PC-9 (cell line): ENCODE measurements at regions of chr16 and their contacts with region 1.

Region 1: DNA sequence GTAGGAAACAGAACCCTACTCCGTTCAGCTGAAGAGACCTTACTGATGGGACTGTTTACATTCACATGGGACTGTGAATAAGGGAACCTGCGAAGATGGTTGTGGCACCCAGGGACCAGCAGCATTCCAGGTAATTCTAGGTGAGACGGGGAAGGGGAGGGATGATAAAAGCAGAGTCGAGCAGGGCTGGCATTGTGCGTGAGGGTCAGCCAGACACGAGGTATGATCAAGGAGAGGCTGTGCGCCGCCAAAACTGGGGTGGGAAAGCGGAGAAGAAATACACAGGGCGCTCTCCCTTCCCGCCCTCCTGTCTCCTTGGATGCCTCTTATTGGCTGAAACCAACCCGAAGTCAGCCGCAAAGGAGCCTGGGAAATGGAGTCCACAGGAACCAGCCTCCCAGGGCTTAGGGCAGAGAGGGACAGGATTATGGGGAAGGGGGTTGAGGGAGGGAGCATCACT is 38.4 kb upstream of the CSNK2A2 start:
- DNase-seq: peak in 1 of 2 experiments; percentile 56
- H3K4me3 ChIP-seq: peak overlapping the region; percentile 61
- H3K27ac ChIP-seq: no peak overlapping the region
- H3K4me1 ChIP-seq: 0 out of 2 replicates have a peak, but pooled peaks cover 4% of the 10 kb centered on the region
- H3K27me3 ChIP-seq: no peaks in the 10 kb centered on the region
- CTCF ChIP-seq: no peak

Region 2: DNA sequence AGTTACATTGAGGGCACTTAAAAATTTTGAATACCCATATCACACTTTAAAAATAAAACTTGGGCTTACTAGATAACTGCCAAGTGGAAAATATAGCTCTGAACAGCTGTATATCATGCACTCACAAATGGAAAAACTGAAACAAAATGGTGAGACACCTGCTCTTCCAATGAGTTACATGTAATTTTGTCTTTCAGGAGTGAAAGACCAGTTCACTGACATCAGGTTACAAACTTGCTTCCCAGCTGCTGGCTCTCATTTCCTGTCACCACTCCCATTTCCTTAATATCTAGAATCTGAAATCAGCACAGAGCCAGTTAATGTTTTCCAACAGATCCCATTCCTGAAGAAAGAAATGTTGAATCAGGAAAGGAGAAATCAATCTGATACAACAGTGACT is 49.2 kb before region 1 on chr16:
- CTCF ChIA-PET with region 1: no interaction called
- POLR2A ChIA-PET with region 1: no interaction called
- intact Hi-C with region 1: no loop called
- DNase-seq: no peak
- H3K4me3 ChIP-seq: no peak overlapping the region
- H3K27ac ChIP-seq: 0 out of 2 replicates have a peak overlapping the region, but pooled peaks have one; percentile 4
- H3K4me1 ChIP-seq: no peaks in the 10 kb centered on the region
- H3K27me3 ChIP-seq: no peaks in the 10 kb centered on the region
- CTCF ChIP-seq: no peak

Region 3: DNA sequence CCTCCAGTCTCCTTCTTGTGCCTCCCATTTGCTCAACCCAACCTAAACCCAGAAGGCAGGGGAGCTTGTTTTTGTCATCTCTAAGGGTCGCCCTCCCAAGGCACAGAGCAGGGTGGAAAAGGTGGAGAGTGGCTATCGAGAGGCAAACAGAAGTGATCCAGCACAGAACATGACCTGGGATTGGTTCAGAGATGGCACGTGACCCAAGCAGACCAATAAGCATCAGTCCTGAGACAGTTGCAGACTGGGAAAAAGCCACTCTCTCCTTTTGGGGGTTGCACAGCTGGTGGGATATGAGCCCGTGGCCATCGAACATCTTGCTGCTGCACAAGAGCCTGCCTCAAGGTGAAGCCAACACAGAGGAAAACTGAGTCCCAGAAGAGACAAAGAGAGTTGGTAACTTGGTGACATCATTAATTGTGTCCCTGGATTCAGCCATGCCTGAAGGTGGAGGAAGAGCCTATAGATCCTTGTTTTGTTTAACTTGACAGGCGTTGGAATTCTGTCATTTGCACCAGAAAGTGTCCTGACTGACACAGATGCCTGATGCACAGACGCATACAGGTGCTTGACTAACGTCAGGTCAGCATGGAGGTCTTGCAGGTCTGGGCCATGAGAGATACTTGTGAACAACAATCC is 10.2 kb before region 1 on chr16:
- CTCF ChIA-PET with region 1: no interaction called
- POLR2A ChIA-PET with region 1: interaction called, 11 read pairs
- intact Hi-C with region 1: no loop called
- DNase-seq: no peak
- H3K4me3 ChIP-seq: no peak overlapping the region
- H3K27ac ChIP-seq: no peak overlapping the region
- H3K4me1 ChIP-seq: peaks cover 25% of the 10 kb centered on the region
- H3K27me3 ChIP-seq: no peaks in the 10 kb centered on the region
- CTCF ChIP-seq: no peak

Region 4: DNA sequence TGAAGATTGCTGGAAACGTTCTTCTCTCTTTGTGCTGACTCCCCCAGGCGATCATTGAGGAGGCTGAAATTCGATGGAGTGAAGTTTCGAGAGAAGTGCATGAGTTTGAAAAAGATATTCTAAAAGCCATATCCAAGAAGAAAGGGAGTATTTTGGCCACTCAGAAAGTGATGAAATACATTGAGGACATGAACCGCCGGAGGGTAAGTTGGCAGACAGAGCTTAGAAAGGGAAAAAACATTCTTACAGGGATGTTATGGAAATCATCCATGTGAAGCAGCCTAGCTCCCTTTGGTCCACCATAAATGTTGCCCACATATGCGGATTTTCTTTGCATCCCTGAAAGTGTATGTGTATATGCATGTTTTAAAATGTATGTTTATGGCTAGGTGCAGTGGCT is 22.1 kb after region 1 on chr16:
- CTCF ChIA-PET with region 1: no interaction called
- POLR2A ChIA-PET with region 1: no interaction called
- intact Hi-C with region 1: no loop called
- DNase-seq: no peak
- H3K4me3 ChIP-seq: no peak overlapping the region
- H3K27ac ChIP-seq: no peak overlapping the region
- H3K4me1 ChIP-seq: no peaks in the 10 kb centered on the region
- H3K27me3 ChIP-seq: no peaks in the 10 kb centered on the region
- CTCF ChIP-seq: no peak